CD14-positive monocyte (primary cell): ENCODE measurements at regions of chr18 and their contacts with region 1.

Region 1: DNA sequence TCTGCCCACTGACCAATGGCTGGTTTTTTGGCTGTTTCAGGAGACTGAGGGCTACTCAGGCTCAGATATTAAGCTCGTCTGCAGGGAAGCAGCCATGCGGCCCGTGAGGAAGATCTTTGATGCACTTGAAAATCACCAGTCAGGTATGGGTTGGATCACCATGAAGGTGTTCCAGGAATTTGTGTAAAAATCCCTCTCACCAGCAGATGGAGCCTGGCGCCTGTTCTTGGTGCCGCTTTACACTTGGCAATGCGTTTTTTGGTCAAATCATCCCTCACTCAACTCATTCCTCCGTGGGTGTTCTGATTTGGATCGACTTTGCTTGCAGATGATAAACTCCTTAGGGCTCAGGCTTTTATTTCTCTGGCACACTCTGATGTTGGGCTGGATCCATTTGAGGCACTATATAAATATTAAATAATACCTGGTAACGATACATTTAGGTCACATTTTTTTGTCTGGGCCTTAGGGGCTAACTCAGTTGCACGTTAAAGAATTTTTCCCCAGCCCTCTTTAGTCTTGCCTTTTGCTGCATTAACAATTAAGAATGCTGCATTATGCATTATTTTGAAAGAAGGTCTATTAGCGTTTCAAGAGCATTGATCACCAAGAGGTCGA is 50.0 kb downstream of the HDHD2 start:
- DNase-seq: peak in 2 of 3 donors; percentile 10
- H3K4me3 ChIP-seq: no peak overlapping the region
- H3K4me3 Mint-ChIP-seq: no peak overlapping the region
- H3K27ac ChIP-seq: no peak overlapping the region
- H3K27ac Mint-ChIP-seq: peak overlapping the region in 1 of 7 donors; percentile 27
- H3K4me1 ChIP-seq: no peaks in the 10 kb centered on the region
- H3K4me1 Mint-ChIP-seq: no peaks in the 10 kb centered on the region
- H3K27me3 ChIP-seq: no peaks in the 10 kb centered on the region
- H3K27me3 Mint-ChIP-seq: peaks cover 0 to 1% (median 0%) of the 10 kb centered on the region in 3 donors
- CTCF ChIP-seq: peak; percentile 61

Region 2: DNA sequence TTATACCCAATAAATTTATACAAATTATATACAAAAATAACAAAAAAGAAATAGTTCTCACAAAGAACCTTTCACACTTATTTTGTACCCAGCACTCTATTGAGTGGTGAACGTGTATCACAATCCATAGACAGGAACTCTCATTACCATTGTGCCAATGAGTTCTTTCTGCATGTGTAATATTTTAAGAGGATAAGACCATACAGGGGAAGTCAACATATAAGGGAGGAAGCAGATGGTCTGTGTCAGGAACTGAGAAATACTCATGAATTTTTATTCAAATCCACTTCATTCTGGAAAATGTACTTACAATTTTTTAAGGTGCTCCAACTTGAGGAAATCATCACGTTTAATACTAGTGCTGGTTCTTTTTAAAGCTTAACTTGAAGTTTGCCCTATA is 37.9 kb before region 1 on chr18:
- intact Hi-C with region 1: no loop called
- DNase-seq: no peak
- H3K4me3 ChIP-seq: no peak overlapping the region
- H3K4me3 Mint-ChIP-seq: no peak overlapping the region
- H3K27ac ChIP-seq: no peak overlapping the region
- H3K27ac Mint-ChIP-seq: no peak overlapping the region
- H3K4me1 ChIP-seq: no peaks in the 10 kb centered on the region
- H3K4me1 Mint-ChIP-seq: no peaks in the 10 kb centered on the region
- H3K27me3 ChIP-seq: no peaks in the 10 kb centered on the region
- H3K27me3 Mint-ChIP-seq: peaks cover 0 to 3% (median 0%) of the 10 kb centered on the region in 3 donors
- CTCF ChIP-seq: no peak

Region 3: GRCh38 chr18:47204908-47205522 is 104.7 kb after region 1 on chr18:
- intact Hi-C with region 1: loop called (anchors 2 to 10 kb)
- DNase-seq: peak; percentile 2 to 16 (median 14)
- H3K4me3 ChIP-seq: no peak overlapping the region
- H3K4me3 Mint-ChIP-seq: no peak overlapping the region
- H3K27ac ChIP-seq: no peak overlapping the region
- H3K27ac Mint-ChIP-seq: no peak overlapping the region
- H3K4me1 ChIP-seq: no peaks in the 10 kb centered on the region
- H3K4me1 Mint-ChIP-seq: no peaks in the 10 kb centered on the region
- H3K27me3 ChIP-seq: peaks cover 2 to 10% of the 10 kb centered on the region in 2 donors
- H3K27me3 Mint-ChIP-seq: peaks cover 2 to 15% (median 7%) of the 10 kb centered on the region in 3 donors
- CTCF ChIP-seq: peak; percentile 77

Region 4: GRCh38 chr18:47748847-47749599 is 648.7 kb after region 1 on chr18:
- intact Hi-C with region 1: loop called in 1 of 2 experiments (anchors 5 kb)
- DNase-seq: peak; percentile 69 to 80 (median 76)
- H3K4me3 ChIP-seq: no peak overlapping the region
- H3K4me3 Mint-ChIP-seq: peak overlapping the region; percentile 27 to 55
- H3K27ac ChIP-seq: no peak overlapping the region
- H3K27ac Mint-ChIP-seq: peak overlapping the region in 1 of 7 donors; percentile 13
- H3K4me1 ChIP-seq: peaks cover 0 to 3% of the 10 kb centered on the region in 2 donors
- H3K4me1 Mint-ChIP-seq: peaks cover 6% of the 10 kb centered on the region
- H3K27me3 ChIP-seq: peaks cover 0 to 12% of the 10 kb centered on the region in 2 donors
- H3K27me3 Mint-ChIP-seq: peaks cover 12 to 29% (median 17%) of the 10 kb centered on the region in 3 donors
- CTCF ChIP-seq: peak; percentile 100